OCI-LY7 (cell line): ENCODE measurements at regions of chr16 and their contacts with region 1.

Region 1: GRCh38 chr16:68244903-68245853 is at the start of gene PLA2G15:
- DNase-seq: peak; percentile 94
- H3K4me3 ChIP-seq: peak within 1 kb of the TSS; percentile 80
- H3K27ac ChIP-seq: peak within 1 kb of the TSS; percentile 2
- H3K4me1 ChIP-seq: peaks cover 34% of the 10 kb centered on the region
- CTCF ChIP-seq: no peak
- total RNA-seq, gene PLA2G15: 38.9 and 46.2 TPM in 2 replicates

Region 2: GRCh38 chr16:68328151-68328859 is 83.1 kb after region 1 on chr16:
- CTCF ChIA-PET with region 1: no interaction called
- POLR2A ChIA-PET with region 1: interaction called, 3 read pairs
- intact Hi-C with region 1: loop called (anchors 1 kb)
- DNase-seq: peak; percentile 91
- H3K4me3 ChIP-seq: no peak overlapping the region
- H3K27ac ChIP-seq: no peak overlapping the region
- H3K4me1 ChIP-seq: peaks cover 28% of the 10 kb centered on the region
- CTCF ChIP-seq: peak; percentile 96

Region 3: GRCh38 chr16:68344252-68344651 is 99.1 kb after region 1 on chr16:
- CTCF ChIA-PET with region 1: no interaction called
- POLR2A ChIA-PET with region 1: no interaction called
- intact Hi-C with region 1: no loop called
- DNase-seq: no peak
- H3K4me3 ChIP-seq: no peak overlapping the region
- H3K27ac ChIP-seq: no peak overlapping the region
- H3K4me1 ChIP-seq: no peaks in the 10 kb centered on the region
- CTCF ChIP-seq: no peak

Region 4: DNA sequence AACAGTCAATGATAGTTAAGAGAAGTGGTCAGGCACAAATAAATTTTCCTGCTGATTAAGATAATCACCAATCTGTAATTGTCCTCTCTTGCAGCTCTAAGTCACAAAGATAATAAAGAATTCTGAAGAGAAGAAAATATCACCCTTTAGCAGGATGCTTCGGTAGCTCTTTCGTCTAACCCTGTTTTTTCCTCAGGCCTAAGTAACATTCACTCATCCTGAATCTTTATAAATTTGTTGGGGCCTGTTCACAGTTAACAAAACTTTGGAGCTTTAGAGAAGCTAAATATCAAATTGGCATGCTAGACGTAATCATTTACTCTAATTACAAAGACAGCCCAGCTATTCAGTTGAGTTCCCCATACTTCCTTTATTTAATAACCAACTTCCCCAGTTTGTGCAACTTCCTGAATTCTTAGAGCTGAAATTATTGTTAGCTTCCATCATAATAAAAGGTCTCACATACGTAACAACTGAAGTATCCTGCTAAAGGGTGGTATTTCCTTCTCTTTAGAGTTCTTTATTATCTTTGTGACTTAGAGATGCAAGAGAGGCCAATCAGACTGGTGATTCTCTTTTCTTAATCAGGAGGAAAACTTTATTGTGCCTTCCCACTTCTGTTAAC is 716.7 kb after region 1 on chr16:
- CTCF ChIA-PET with region 1: no interaction called
- POLR2A ChIA-PET with region 1: no interaction called
- intact Hi-C with region 1: no loop called
- DNase-seq: no peak
- H3K4me3 ChIP-seq: no peak overlapping the region
- H3K27ac ChIP-seq: no peak overlapping the region
- H3K4me1 ChIP-seq: no peaks in the 10 kb centered on the region
- CTCF ChIP-seq: no peak